ENCODE measurements at regions of chr2 and their contacts with region 1.

Region 1: DNA sequence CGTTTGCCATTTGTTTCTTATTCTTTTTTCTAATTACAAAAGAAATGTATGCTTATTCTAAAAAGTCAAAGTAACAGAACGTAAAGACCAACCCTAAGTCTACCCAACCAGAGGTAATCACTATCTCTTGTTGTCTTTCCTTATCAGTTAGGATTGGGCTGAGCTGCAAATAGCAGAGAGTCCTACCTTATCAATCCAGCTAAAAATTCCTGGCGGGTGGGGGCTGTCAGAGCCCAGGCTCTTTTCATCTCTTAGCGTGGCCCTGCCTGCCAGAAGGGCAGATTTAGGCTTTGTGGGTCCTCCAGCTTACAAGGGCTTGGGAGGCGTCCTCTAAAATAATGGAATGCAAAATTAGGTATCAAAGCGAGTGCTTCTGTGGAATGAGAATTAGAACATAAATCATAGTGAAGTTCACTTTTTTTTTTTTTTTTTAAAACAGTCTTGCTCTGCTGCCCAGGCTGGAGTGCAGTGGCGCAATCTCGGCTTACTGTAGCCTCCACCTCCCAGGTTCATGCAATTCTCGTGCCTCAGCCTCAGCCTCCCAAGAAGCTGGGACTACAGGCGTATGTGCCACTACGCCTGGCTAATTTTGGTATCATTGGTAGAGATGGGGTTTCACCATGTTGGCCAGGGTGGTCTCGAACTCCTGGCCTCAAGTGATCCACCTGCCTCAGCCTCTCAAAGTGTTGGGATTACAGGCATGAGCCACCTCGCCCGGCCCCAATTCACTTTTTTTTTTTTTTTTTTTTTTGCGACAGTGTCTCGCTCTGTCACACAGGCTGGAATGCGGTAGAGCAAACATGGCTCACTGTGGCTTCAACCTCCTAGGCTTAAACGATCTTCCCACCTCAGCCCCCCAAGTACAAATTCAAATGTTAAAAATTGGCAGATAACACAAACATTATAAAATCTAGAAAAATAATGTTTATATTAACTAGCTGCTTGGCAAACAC is 57.4 kb upstream of the B3GNT7 start:
- DNase-seq: no peak
- H3K4me3 ChIP-seq: no peak overlapping the region
- H3K4me3 Mint-ChIP-seq: no peak overlapping the region
- H3K27ac ChIP-seq: no peak overlapping the region
- H3K27ac Mint-ChIP-seq: no peak overlapping the region
- H3K4me1 ChIP-seq: no peaks in the 10 kb centered on the region
- H3K4me1 Mint-ChIP-seq: no peaks in the 10 kb centered on the region
- H3K27me3 ChIP-seq: no peaks in the 10 kb centered on the region
- H3K27me3 Mint-ChIP-seq: peaks cover 0 to 4% of the 10 kb centered on the region in 2 donors

Region 2: DNA sequence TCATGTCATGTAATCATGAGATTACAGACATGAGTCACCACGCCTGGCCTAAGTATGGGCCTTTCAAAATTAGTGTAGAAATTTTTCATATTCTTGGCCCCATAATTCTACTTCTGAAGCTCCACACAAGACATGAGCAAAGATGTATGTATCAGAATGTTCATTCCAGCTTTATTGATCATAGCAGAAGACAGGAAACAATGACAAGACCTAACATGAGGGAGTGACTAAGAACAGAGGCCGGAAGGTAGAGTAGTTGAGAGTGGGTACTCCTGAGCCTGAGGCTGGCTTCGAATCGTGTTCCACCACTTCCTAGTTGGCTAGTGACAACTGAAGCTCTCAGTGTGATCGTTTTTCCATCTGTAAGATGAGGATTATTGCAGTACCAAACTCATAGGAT is 50.4 kb before region 1 on chr2:
- CTCF ChIA-PET with region 1: no interaction called
- POLR2A ChIA-PET with region 1: interaction called, 10 read pairs
- DNase-seq: no peak
- H3K4me3 ChIP-seq: no peak overlapping the region
- H3K4me3 Mint-ChIP-seq: no peak overlapping the region
- H3K27ac ChIP-seq: no peak overlapping the region
- H3K27ac Mint-ChIP-seq: no peak overlapping the region
- H3K4me1 ChIP-seq: no peaks in the 10 kb centered on the region
- H3K4me1 Mint-ChIP-seq: no peaks in the 10 kb centered on the region
- H3K27me3 ChIP-seq: no peaks in the 10 kb centered on the region
- H3K27me3 Mint-ChIP-seq: peaks cover 0 to 6% of the 10 kb centered on the region in 2 donors